ENCODE measurements at regions of chr10 and their contacts with region 1.

Region 1: DNA sequence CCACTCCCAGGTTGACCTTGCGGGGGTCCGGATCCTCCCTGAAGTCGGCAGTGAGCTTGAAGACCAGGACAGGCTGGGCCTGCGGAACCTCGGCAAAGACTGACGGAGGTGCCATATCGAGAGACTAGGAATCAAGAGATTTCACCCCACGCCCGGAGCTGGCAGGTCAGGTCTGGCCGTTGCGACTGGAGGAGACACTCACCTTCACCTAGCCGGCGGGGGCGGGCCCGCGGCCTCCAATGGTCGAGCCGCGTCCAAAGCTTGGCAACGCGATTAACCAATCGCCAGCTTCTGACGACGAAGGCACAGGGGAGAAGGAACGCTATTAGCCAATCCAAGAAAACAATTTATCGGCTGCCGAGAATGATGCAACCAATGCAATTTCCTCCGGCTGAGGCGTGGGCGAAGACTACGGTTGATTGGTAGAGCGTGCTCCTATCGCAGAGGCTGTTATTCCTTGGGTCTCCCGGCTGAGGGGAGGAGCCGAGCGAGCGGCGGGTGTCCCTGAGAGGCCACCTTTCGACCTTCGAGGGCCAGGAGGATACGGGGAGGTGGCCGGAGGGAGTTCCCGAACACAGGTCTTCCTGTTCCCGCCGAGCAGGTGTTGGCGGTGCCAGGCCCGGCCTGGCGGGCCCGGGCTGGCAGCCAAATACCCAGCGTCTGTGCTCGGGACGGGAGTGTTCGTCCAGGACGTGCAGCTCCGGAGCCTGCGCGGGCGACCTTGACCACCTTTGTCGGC is at the start of gene GOT1:
- DNase-seq: peak; percentile 96
- ATAC-seq: peak; percentile 98
- H3K4me3 ChIP-seq: peak within 1 kb of the TSS; percentile 80 to 89
- H3K27ac ChIP-seq: peak within 1 kb of the TSS in 1 of 2 donors; percentile 43
- H3K4me1 ChIP-seq: no peaks in the 10 kb centered on the region
- H3K27me3 ChIP-seq: no peaks in the 10 kb centered on the region
- total RNA-seq, gene GOT1: 9.4 to 13.7 TPM

Region 2: GRCh38 chr10:99598781-99599509 is 168.3 kb after region 1 on chr10:
- intact Hi-C with region 1: no loop called
- DNase-seq: no peak
- ATAC-seq: no peak
- H3K4me3 ChIP-seq: no peak overlapping the region
- H3K27ac ChIP-seq: no peak overlapping the region
- H3K4me1 ChIP-seq: no peaks in the 10 kb centered on the region
- H3K27me3 ChIP-seq: no peaks in the 10 kb centered on the region

Region 3: GRCh38 chr10:99742701-99743100 is 312.1 kb after region 1 on chr10:
- intact Hi-C with region 1: loop called in 1 of 2 experiments (anchors 10 kb)
- DNase-seq: no peak
- ATAC-seq: no peak
- H3K4me3 ChIP-seq: no peak overlapping the region
- H3K27ac ChIP-seq: peak overlapping the region in 1 of 2 donors; percentile 12
- H3K4me1 ChIP-seq: no peaks in the 10 kb centered on the region
- H3K27me3 ChIP-seq: no peaks in the 10 kb centered on the region

Measured in aorta (tissue), 5 donors.